ENCODE measurements at regions of chr1 and their contacts with region 1.

Region 1: DNA sequence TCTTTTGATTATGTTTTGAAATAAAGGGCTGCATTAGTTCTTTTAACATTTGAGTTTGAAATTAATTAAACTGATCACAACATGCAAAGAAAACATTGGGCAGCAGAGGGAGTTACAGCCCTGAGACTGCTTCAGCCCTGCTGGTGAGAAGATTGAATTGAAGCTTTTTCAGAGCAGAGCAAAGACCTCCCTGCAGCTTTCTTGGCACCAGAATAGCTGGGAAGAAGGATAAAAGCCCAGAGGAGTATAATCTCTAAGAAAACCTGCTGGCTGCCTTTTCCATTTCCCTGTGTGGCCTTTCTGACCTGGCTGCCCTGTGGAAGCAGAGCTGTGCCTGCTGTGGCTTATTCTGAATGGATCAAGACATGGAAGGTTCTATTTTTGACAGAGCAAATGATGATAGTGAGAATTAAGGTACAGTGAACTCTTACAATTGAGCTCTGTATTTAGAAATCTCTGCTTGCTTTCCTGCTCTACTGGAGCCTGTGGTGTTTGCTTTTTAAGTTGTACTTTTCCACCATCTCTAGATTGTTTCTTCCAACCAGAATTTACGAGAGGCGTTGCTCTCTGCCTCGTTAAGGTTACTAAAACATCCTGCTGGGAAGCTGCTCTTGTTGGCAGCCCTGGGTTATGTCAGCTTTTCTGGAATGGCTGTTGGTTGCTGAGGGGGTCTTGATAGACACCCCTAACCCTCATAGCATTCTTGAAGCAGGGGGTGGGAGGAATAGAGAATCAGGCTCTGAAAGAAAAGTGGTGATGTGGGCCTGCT is 9.9 kb downstream of the SNRPE start:
- DNase-seq: peak; percentile 41 to 60
- H3K4me3 ChIP-seq: no peak overlapping the region
- H3K27ac ChIP-seq: peak overlapping the region; percentile 63
- H3K4me1 ChIP-seq: peaks cover 33% of the 10 kb centered on the region
- H3K27me3 ChIP-seq: no peaks in the 10 kb centered on the region
- CTCF ChIP-seq: peak; percentile 92

Region 2: DNA sequence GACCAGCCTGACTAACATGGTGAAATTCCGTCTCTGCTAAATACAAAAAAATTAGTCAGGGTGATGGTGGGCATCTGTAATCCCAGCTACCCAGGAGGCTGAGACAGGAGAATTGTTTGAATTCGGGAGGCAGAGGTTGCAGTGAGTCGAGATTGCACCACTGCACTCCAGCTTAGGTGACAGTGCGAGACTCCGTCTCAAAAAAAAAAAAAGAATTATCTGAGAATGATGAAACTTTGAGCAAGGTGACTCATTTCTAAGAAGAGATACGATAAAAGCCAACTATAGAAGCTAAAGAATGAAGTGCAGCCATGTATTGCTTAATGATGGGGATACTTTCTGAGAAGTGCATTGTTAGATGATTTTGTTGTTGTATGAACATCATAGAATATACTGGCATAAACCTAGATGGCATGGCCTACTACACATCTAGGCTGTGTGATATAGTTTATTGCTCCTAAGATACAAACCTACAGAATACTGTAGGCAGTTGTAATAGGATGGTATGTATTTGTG is 54.8 kb after region 1 on chr1:
- CTCF ChIA-PET with region 1: no interaction called
- POLR2A ChIA-PET with region 1: no interaction called
- intact Hi-C with region 1: no loop called
- DNase-seq: peak in 1 of 2 experiments; percentile 74
- H3K4me3 ChIP-seq: no peak overlapping the region
- H3K27ac ChIP-seq: peak overlapping the region; percentile 72
- H3K4me1 ChIP-seq: peaks cover 22% of the 10 kb centered on the region
- H3K27me3 ChIP-seq: no peaks in the 10 kb centered on the region
- CTCF ChIP-seq: no peak

Region 3: GRCh38 chr1:203985044-203985443 is 113.8 kb after region 1 on chr1:
- CTCF ChIA-PET with region 1: no interaction called
- POLR2A ChIA-PET with region 1: no interaction called
- intact Hi-C with region 1: loop called (anchors 1 kb)
- DNase-seq: peak in 1 of 2 experiments; percentile 51
- H3K4me3 ChIP-seq: no peak overlapping the region
- H3K27ac ChIP-seq: no peak overlapping the region
- H3K4me1 ChIP-seq: peaks cover 6% of the 10 kb centered on the region; the same call in 1 of the 2 replicates
- H3K27me3 ChIP-seq: no peaks in the 10 kb centered on the region
- CTCF ChIP-seq: no peak

Region 4: DNA sequence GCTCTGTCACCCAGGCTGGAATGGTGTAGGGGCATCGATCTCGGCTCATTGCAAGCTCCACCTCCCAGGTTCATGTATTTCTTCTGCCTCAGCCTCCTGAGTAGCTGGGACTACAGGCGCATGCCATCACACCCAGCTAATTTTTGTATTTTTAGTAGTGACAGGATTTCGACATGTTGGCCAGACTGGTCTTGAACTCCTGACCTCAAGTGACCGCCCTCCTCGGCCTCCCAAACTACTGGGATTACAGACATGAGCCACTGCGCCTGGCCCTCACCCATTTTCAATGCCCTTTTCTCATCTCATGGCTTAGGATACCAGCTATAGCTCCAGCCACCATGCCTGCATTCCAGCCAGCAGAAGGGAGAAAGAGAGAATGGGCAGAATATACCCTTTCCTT is 188.7 kb after region 1 on chr1:
- CTCF ChIA-PET with region 1: no interaction called
- POLR2A ChIA-PET with region 1: interaction called, 12 read pairs
- intact Hi-C with region 1: loop called (anchors 1 kb)
- DNase-seq: no peak
- H3K4me3 ChIP-seq: no peak overlapping the region
- H3K27ac ChIP-seq: no peak overlapping the region
- H3K4me1 ChIP-seq: peaks cover 54% of the 10 kb centered on the region
- H3K27me3 ChIP-seq: no peaks in the 10 kb centered on the region
- CTCF ChIP-seq: no peak

Region 5: GRCh38 chr1:204072931-204073836 is 201.9 kb after region 1 on chr1 and contains the start of gene SOX13:
- CTCF ChIA-PET with region 1: interaction called, 14 read pairs
- POLR2A ChIA-PET with region 1: interaction called, 3 read pairs
- intact Hi-C with region 1: loop called (anchors 1 kb)
- DNase-seq: peak; percentile 63 to 83
- H3K4me3 ChIP-seq: peak within 1 kb of the TSS; percentile 96
- H3K27ac ChIP-seq: peak within 1 kb of the TSS; percentile 52
- H3K4me1 ChIP-seq: peaks cover 30% of the 10 kb centered on the region
- H3K27me3 ChIP-seq: no peaks in the 10 kb centered on the region
- CTCF ChIP-seq: peak; percentile 48
- total RNA-seq, gene SOX13: 89.9 and 102 TPM in 2 replicates

Region 6: DNA sequence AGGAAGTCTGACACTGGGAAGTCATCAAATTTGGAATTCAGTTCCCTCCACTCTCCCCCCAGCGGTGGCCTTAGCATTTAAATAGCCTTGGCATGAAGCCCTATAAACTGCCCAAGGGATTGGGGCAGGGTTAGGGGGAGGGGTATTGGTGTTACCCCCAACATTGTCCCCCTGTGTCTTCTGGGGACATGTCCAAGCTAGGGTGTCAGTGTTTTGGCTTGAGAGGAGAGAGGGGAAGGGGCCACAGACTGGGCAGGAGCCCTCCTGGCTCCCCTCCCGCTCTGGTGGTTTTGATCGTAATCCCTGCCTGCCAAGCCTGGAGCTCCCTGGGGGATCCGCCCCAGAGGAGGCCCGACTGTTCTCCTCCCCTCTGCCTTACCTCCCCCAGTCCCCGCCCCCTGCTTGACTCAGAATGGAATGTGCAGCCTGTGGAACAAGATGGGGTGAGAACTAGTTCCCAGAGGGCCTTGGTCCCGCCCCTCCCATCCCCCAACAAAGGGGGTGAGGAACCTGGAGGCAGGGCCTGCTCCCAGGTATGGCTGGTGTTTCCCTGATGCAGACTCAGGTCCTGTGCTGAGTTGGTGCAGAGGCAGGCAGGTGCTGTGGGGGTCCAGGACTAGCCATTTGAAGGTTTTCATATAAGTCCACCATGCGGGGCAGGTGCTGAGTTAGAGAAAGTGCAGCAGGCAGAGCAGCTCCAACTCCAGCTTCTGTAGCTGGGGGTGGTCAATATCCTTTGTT is 209.0 kb after region 1 on chr1:
- CTCF ChIA-PET with region 1: interaction called, 3 read pairs
- POLR2A ChIA-PET with region 1: no interaction called
- intact Hi-C with region 1: loop called (anchors 2 kb)
- DNase-seq: peak; percentile 92 to 94
- H3K4me3 ChIP-seq: peak overlapping the region; percentile 35; the same call in 1 of the 2 replicates
- H3K27ac ChIP-seq: peak overlapping the region; percentile 77
- H3K4me1 ChIP-seq: peaks cover 96% of the 10 kb centered on the region
- H3K27me3 ChIP-seq: no peaks in the 10 kb centered on the region
- CTCF ChIP-seq: no peak

Region 7: DNA sequence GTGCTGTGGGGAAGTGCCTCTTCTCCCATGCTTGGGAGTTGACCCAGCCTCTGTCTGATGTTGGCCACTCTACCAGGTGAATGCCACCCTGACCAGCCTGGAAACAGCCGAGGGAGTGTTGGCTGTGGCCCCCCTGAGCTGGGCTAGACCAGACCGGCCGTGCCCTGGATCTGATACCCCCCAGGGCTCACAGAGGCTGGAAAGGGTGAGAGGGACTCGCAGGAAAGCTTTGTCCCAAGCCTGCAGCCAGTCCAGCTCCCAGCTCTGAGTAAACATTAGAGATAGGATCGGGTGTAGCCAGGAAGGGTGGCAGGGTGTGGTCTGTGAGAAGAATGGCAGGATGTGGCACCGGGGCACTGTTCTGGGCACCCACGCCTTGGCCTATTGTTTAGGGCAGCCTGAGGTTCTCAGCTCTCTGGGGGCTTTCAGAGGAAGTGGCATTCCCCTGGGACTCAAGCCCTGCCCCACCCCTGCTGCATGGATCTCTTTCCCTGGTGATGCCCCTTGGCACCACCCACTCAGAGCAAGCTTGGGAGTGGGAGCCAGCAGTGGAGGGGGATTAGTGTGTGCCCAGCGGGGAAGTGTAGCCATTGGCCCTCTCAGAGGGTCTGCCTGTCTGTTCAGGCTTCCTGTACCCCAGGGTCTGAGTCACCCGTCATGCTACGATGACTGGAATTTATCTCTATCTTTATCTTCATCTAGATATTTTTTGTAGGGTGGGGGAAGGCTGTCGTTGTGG is 233.0 kb after region 1 on chr1:
- CTCF ChIA-PET with region 1: interaction called, 5 read pairs
- POLR2A ChIA-PET with region 1: no interaction called
- intact Hi-C with region 1: loop called (anchors 1 kb)
- DNase-seq: peak; percentile 88 to 92
- H3K4me3 ChIP-seq: peak overlapping the region; percentile 38
- H3K27ac ChIP-seq: peak overlapping the region; percentile 96
- H3K4me1 ChIP-seq: peaks cover 84% of the 10 kb centered on the region
- H3K27me3 ChIP-seq: no peaks in the 10 kb centered on the region
- CTCF ChIP-seq: no peak

Region 8: GRCh38 chr1:204446370-204447111 is 575.2 kb after region 1 on chr1:
- CTCF ChIA-PET with region 1: no interaction called
- POLR2A ChIA-PET with region 1: interaction called, 12 read pairs
- intact Hi-C with region 1: no loop called
- DNase-seq: peak in 1 of 2 experiments; percentile 34
- H3K4me3 ChIP-seq: no peak overlapping the region
- H3K27ac ChIP-seq: no peak overlapping the region
- H3K4me1 ChIP-seq: peaks cover 73% of the 10 kb centered on the region
- H3K27me3 ChIP-seq: no peaks in the 10 kb centered on the region
- CTCF ChIP-seq: peak; percentile 57